K562 (cell line): ENCODE measurements at regions of chr20 and their contacts with region 1.

Region 1: DNA sequence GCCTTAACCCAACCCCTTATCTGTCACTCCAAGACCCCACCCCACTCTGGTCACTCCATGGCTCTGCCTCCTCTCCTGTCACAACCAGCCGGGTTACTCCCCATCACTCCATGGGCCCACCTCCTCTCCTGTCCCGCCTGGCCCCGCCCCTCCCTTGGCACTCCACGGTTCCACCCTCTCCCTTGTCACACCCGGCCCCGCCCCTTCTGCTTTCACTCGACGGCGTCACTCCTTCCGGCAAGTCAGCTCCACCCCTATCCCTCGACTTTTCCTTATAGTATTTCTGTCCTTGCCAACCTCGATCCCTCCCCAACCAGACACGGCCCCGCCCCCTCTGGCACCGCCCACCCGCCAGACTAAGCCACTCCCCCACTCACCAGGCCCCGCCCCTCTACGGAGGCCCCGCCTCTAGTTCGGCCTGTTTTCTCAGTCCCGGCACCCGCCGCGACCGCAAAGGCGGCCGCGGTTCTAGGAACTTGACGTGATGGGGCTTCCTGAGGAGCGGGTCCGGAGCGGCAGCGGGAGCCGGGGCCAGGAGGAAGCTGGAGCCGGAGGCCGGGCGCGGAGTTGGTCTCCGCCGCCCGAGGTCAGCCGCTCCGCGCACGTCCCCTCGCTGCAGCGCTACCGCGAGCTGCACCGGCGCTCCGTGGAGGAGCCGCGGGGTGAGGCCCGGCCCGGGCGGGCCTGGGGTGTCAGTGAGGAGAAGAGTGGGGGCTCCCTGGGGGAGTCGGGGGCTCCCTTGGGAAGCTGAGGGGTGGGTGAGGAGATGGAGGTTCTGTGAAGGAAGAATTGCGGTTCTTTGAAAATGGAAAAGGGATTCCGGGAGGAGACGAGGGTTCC is at the start of gene ACSS2:
- DNase-seq: peak; percentile 93 to 99 (median 95)
- ATAC-seq: peak; percentile 86
- H3K4me3 ChIP-seq: peak within 1 kb of the TSS; percentile 90
- H3K27ac ChIP-seq: peak within 1 kb of the TSS; percentile 85
- H3K4me1 ChIP-seq: peaks cover 45 to 48% of the 10 kb centered on the region in 2 experiments; a peak in 4 of 5 replicates
- H3K27me3 ChIP-seq: no peaks in the 10 kb centered on the region; a peak in 1 of 5 replicates
- CTCF ChIP-seq: no peak
- EP300 ChIP-seq: no peak
- POLR2A ChIP-seq: peak; percentile 82
- RAD21 ChIP-seq: no peak
- polyA plus RNA-seq, gene ACSS2: 21.9 to 26.5 TPM

Region 2: DNA sequence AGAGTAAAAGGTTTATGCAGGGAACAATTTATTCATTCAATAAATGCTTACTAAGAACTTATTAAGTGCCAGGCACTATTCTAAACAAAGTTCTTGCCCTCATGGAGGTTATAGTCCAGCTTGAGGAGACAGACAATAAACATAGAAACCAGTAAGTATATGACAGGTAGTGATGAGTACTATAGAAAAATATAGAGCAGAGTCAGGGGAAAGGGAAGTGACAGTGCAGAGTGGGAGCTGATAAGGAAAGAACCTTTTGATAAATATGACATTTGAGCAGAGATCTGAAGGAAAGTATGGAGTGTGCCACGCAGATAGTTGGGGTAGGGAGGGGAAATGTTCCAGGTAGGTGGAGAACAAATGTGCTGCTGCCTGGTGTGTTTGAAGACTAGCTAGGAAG is 12.1 kb after region 1 on chr20:
- CTCF ChIA-PET with region 1: no interaction called
- POLR2A ChIA-PET with region 1: interaction called, 14 read pairs
- in situ Hi-C with region 1: no loop called
- intact Hi-C with region 1: no loop called
- DNase-seq: peak; percentile 25 to 83 (median 50)
- ATAC-seq: peak; percentile 82
- H3K4me3 ChIP-seq: no peak overlapping the region
- H3K27ac ChIP-seq: peak overlapping the region; percentile 68
- H3K4me1 ChIP-seq: peaks cover 5 to 28% of the 10 kb centered on the region in 2 experiments; a peak in 4 of 5 replicates
- H3K27me3 ChIP-seq: no peaks in the 10 kb centered on the region
- CTCF ChIP-seq: no peak
- EP300 ChIP-seq: peak; percentile 84
- POLR2A ChIP-seq: no peak
- RAD21 ChIP-seq: no peak

Region 3: DNA sequence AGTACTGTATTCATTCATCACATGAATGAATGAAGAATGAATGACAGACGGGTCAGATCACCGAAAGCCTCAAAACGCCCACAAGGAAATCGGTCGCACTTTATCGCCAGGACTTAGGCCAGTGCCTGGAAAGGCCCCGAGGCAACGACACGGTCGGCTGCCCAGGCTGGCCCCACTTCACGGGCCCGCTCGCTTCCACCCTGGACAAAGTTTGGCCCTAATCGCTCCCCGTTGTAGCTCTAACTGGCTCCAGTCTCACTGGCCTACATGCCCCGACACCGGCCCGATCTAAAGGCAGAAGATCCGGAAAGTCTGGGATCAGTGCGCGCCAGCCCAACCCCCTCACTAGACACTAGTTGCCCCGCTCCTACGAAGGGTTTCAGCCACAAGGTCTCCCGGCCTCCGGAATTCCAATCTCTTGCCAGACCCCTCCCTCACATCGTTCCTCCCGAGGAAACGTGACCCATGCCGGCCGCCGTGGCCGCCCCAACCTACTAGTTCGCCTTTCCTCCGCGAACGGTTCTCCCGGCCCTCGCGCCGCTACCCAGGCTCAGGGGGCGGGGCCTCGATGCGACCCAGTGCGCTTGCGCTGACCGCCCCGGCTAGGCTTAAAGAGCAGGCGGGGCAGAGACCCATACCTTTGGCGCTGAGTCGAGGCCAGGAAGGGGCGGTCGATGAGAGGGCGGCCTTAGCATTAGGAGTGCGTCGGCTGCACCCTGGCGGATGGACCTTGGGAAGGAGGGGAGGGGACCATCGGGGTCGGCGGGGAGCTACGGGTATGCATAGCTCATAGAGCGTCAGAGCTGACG is 79.1 kb after region 1 on chr20 and contains the starts of genes GSS and MYH7B:
- CTCF ChIA-PET with region 1: interaction called, 5 read pairs
- POLR2A ChIA-PET with region 1: interaction called, 5 read pairs
- in situ Hi-C with region 1: loop called (anchors 5 kb)
- intact Hi-C with region 1: loop called (anchors 1 kb)
- DNase-seq: peak; percentile 97 to 99 (median 98)
- ATAC-seq: peak; percentile 95
- H3K4me3 ChIP-seq: peak within 1 kb of the TSS; percentile 55
- H3K27ac ChIP-seq: peak within 1 kb of the TSS; percentile 89
- H3K4me1 ChIP-seq: peaks cover 16 to 22% of the 10 kb centered on the region in 2 experiments; a peak in 4 of 5 replicates
- H3K27me3 ChIP-seq: no peaks in the 10 kb centered on the region
- CTCF ChIP-seq: peak; percentile 61 to 73 (median 68); a peak in 5 of 6 replicates
- EP300 ChIP-seq: no peak
- POLR2A ChIP-seq: peak; percentile 97
- RAD21 ChIP-seq: peak; percentile 65 to 75
- polyA plus RNA-seq, gene GSS: 18.4 to 40.4 TPM
- polyA plus RNA-seq, gene MYH7B: not detected

Region 4: GRCh38 chr20:35092524-35093266 is 216.3 kb after region 1 on chr20 and contains the start of gene TRPC4AP:
- CTCF ChIA-PET with region 1: no interaction called
- POLR2A ChIA-PET with region 1: interaction called, 3 read pairs
- in situ Hi-C with region 1: no loop called
- intact Hi-C with region 1: loop called (anchors 1 kb)
- DNase-seq: peak; percentile 88 to 94 (median 88)
- ATAC-seq: peak; percentile 92
- H3K4me3 ChIP-seq: peak within 1 kb of the TSS; percentile 92
- H3K27ac ChIP-seq: peak within 1 kb of the TSS; percentile 93
- H3K4me1 ChIP-seq: peaks cover 15 to 18% of the 10 kb centered on the region in 2 experiments
- H3K27me3 ChIP-seq: no peaks in the 10 kb centered on the region
- CTCF ChIP-seq: peak; percentile 91 to 98 (median 96)
- EP300 ChIP-seq: peak; percentile 55
- POLR2A ChIP-seq: peak; percentile 88
- RAD21 ChIP-seq: peak; percentile 19 to 41; a peak in 1 of 4 replicates
- polyA plus RNA-seq, gene TRPC4AP: 2.3 to 3.6 TPM

Region 5: DNA sequence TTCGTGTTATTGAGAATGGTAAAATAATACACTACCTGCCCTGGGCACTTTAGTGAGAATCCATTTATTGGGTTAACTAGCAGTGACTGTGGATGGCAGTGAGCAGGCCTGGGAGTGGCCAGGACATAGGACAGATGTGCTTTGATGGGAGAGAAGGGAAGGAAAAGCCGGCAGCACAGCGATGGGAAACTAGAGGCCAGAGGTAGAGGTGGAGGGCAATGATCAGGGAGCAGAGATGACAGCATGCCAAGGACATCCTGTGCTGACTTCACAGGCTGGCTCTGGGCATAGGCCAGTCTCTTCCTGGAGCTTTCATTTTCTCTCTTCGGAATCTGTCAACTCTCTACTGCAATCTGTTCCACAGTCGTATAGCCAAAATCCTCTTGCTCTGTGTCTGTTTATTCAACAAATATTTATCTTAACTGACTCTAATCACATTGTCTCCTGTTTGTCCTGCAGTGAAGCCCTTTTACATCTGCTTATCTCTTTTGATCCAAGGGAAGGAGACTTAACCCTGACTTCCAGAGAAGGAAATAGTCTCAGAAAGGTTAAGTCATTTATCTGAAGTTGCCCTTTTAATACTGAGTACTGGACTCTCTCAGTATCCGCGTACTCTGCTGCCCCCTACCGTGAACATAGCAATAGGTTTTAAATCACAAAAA is 331.7 kb after region 1 on chr20:
- CTCF ChIA-PET with region 1: interaction called, 4 read pairs
- POLR2A ChIA-PET with region 1: no interaction called
- in situ Hi-C with region 1: no loop called
- intact Hi-C with region 1: loop called (anchors 1 kb)
- DNase-seq: peak; percentile 59 to 90 (median 64)
- ATAC-seq: peak; percentile 98
- H3K4me3 ChIP-seq: no peak overlapping the region
- H3K27ac ChIP-seq: no peak overlapping the region
- H3K4me1 ChIP-seq: peaks cover 0 to 6% of the 10 kb centered on the region in 2 experiments; a peak in 2 of 5 replicates
- H3K27me3 ChIP-seq: no peaks in the 10 kb centered on the region
- CTCF ChIP-seq: peak; percentile 78 to 95 (median 79)
- EP300 ChIP-seq: peak; percentile 55
- POLR2A ChIP-seq: no peak
- RAD21 ChIP-seq: peak; percentile 98 to 99

Region 6: DNA sequence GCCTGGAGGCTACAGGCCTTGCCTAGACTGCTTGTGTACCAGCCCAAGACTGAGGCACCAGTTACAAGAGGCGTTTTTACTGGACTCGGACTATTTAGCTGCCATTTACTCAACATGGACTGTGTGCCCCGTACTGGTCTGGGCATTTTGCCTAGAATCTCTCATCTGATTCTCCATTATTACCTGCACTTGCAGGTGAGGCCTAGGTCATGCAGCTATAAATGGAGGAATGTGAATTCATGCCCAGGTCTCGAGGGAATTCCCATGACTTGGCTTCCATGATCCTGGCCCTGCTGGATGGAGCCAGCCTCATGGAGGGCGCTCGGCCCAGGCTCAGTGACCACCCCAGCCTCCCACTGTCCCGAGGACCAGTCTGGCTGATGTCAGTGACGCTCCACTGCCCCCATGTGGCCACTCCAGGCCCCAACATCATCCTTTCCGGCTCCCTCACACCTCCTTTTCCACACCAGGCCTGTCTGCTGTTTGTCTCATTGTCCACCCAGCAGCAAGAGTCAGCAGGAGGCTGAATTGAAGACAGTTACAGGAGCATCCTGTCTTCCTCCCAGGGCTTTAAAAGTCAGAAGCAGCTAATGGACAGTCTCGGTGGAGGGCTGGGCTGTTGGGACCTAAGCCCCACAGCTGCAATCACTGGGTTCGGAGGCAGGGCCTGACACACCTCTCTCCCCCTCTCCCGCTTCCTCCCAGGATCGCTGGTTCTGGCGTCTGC is 392.8 kb after region 1 on chr20:
- CTCF ChIA-PET with region 1: no interaction called
- POLR2A ChIA-PET with region 1: no interaction called
- in situ Hi-C with region 1: no loop called
- intact Hi-C with region 1: loop called (anchors 10 kb)
- DNase-seq: peak; percentile 80 to 83 (median 82)
- ATAC-seq: peak; percentile 86
- H3K4me3 ChIP-seq: no peak overlapping the region
- H3K27ac ChIP-seq: no peak overlapping the region
- H3K4me1 ChIP-seq: peaks cover 8 to 33% of the 10 kb centered on the region in 2 experiments; a peak in 4 of 5 replicates
- H3K27me3 ChIP-seq: no peaks in the 10 kb centered on the region
- CTCF ChIP-seq: peak; percentile 85 to 93 (median 90)
- EP300 ChIP-seq: no peak
- POLR2A ChIP-seq: no peak
- RAD21 ChIP-seq: peak; percentile 61 to 83